CD8-positive, alpha-beta memory T cell (primary cell): ENCODE measurements at regions of chr20 and their contacts with region 1.

Region 1: DNA sequence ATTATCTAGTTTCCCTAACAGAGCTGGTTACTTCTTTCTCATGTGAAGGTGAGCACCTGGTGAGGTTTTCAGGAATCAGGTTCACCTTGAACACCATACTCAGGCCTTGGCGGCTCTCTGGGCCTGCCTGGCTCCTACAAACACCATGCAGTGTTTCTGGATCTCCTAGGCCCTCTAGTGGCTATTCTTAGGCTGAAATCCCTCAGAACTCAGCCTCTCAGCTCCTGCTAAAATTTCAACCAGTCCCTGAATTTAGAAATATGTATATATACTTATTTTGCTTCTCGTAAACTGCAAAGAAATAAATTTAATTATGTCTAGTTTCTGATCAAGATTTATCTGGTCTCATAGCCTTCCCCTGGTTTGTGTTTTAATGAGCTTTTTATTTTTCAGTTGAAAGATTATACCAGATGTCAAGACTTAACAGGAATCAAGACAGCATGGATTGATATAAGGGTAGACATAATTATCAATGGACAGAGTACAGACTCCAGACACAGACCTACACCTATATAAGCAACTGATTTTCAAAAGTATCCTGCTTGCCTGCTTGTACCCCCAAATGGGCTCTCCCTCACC is 55.9 kb downstream of the ANKEF1 start:
- DNase-seq: peak in 2 of 5 donors; percentile 2 to 26
- H3K4me3 ChIP-seq: no peak overlapping the region
- H3K4me3 Mint-ChIP-seq: no peak overlapping the region
- H3K27ac ChIP-seq: no peak overlapping the region
- H3K27ac Mint-ChIP-seq: no peak overlapping the region
- H3K4me1 ChIP-seq: no peaks in the 10 kb centered on the region
- H3K4me1 Mint-ChIP-seq: no peaks in the 10 kb centered on the region
- H3K27me3 ChIP-seq: no peaks in the 10 kb centered on the region
- H3K27me3 Mint-ChIP-seq: peaks cover 2 to 18% of the 10 kb centered on the region in 2 donors

Region 2: GRCh38 chr20:9978397-9979004 is 112.2 kb before region 1 on chr20:
- CTCF ChIA-PET with region 1: interaction called, 48 read pairs
- POLR2A ChIA-PET with region 1: no interaction called
- DNase-seq: peak in 4 of 5 donors; percentile 3 to 57 (median 50)
- H3K4me3 ChIP-seq: no peak overlapping the region
- H3K4me3 Mint-ChIP-seq: no peak overlapping the region
- H3K27ac ChIP-seq: no peak overlapping the region
- H3K27ac Mint-ChIP-seq: no peak overlapping the region
- H3K4me1 ChIP-seq: no peaks in the 10 kb centered on the region
- H3K4me1 Mint-ChIP-seq: no peaks in the 10 kb centered on the region
- H3K27me3 ChIP-seq: no peaks in the 10 kb centered on the region
- H3K27me3 Mint-ChIP-seq: peaks cover 3 to 8% of the 10 kb centered on the region in 2 donors

Region 3: DNA sequence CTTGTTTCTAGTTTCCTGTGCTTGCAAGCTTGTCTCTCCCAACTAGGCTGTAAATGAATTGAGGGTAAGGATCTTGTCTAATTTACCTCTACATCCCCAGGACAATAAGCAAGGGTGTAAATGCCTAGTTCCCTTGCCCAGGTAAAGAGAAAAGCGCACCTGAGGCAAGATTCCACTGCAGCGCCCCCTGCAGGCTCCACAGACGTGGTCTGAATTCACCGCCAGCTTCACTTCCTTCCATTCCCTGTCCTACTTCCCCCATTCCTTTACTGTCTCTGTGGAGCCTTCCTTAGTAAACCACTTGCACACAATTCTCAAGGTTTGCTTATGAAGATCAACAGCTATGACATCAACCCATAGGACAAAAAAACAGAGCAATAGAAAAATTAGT is 13.6 kb before region 1 on chr20:
- CTCF ChIA-PET with region 1: interaction called, 14 read pairs
- POLR2A ChIA-PET with region 1: no interaction called
- DNase-seq: no peak
- H3K4me3 ChIP-seq: no peak overlapping the region
- H3K4me3 Mint-ChIP-seq: no peak overlapping the region
- H3K27ac ChIP-seq: no peak overlapping the region
- H3K27ac Mint-ChIP-seq: peak overlapping the region in 1 of 8 donors; percentile 16
- H3K4me1 ChIP-seq: no peaks in the 10 kb centered on the region
- H3K4me1 Mint-ChIP-seq: no peaks in the 10 kb centered on the region
- H3K27me3 ChIP-seq: no peaks in the 10 kb centered on the region
- H3K27me3 Mint-ChIP-seq: peaks cover 14 to 30% of the 10 kb centered on the region in 2 donors

Region 4: DNA sequence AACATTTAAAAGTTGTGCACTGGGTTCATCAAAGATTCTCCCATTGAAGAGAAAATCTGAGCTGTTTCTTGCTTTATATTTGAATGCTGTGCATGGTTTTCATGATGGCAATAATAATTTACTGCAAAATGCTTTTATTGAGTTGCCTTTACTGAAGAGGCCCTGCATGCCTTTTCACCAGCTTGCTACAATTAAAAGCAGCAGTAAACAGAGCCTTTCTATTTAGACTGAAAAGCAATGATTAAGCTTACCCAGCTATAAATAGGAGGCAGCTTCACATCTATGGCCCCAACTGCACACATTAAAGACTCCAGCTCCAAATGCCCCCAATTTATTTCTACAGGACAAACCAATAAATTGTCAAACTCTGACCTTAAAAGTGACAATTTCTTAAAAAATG is 14.4 kb after region 1 on chr20:
- CTCF ChIA-PET with region 1: no interaction called
- POLR2A ChIA-PET with region 1: no interaction called
- DNase-seq: no peak
- H3K4me3 ChIP-seq: no peak overlapping the region
- H3K4me3 Mint-ChIP-seq: no peak overlapping the region
- H3K27ac ChIP-seq: no peak overlapping the region
- H3K27ac Mint-ChIP-seq: no peak overlapping the region
- H3K4me1 ChIP-seq: no peaks in the 10 kb centered on the region
- H3K4me1 Mint-ChIP-seq: no peaks in the 10 kb centered on the region
- H3K27me3 ChIP-seq: no peaks in the 10 kb centered on the region
- H3K27me3 Mint-ChIP-seq: peaks cover 0 to 4% of the 10 kb centered on the region in 2 donors

Region 5: GRCh38 chr20:10185741-10186558 is 95.3 kb after region 1 on chr20:
- CTCF ChIA-PET with region 1: no interaction called
- POLR2A ChIA-PET with region 1: no interaction called
- DNase-seq: no peak
- H3K4me3 ChIP-seq: no peak overlapping the region
- H3K4me3 Mint-ChIP-seq: no peak overlapping the region
- H3K27ac ChIP-seq: no peak overlapping the region
- H3K27ac Mint-ChIP-seq: no peak overlapping the region
- H3K4me1 ChIP-seq: no peaks in the 10 kb centered on the region
- H3K4me1 Mint-ChIP-seq: no peaks in the 10 kb centered on the region
- H3K27me3 ChIP-seq: no peaks in the 10 kb centered on the region
- H3K27me3 Mint-ChIP-seq: peaks cover 4% of the 10 kb centered on the region in 2 donors

Region 6: DNA sequence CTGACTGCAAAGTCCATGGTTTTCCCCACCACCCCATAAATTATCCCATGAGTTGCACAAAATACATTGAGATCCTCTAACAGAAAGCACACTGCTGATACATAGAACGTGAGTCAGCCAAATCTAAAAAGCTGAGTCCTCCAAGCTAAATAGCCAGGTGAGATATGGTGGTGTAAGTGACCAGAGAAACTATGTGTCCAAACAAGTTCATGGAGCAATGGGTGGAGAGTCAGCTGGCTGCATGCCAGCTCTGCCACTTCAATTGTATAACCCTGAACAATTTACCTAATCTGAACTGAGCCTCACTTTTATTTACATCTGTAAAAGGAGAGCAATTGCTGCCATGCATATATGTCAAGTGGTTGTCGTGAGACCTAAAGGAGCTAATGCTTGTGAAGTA is 137.7 kb after region 1 on chr20:
- CTCF ChIA-PET with region 1: no interaction called
- POLR2A ChIA-PET with region 1: no interaction called
- DNase-seq: no peak
- H3K4me3 ChIP-seq: no peak overlapping the region
- H3K4me3 Mint-ChIP-seq: no peak overlapping the region
- H3K27ac ChIP-seq: no peak overlapping the region
- H3K27ac Mint-ChIP-seq: no peak overlapping the region
- H3K4me1 ChIP-seq: no peaks in the 10 kb centered on the region
- H3K4me1 Mint-ChIP-seq: no peaks in the 10 kb centered on the region
- H3K27me3 ChIP-seq: no peaks in the 10 kb centered on the region
- H3K27me3 Mint-ChIP-seq: peaks cover 10 to 43% of the 10 kb centered on the region in 2 donors